Activated naive CD4-positive, alpha-beta T cell treated with anti-CD3 and anti-CD28 coated beads for 36 hours (primary cell): ENCODE measurements at regions of chr2 and their contacts with region 1.

Region 1: DNA sequence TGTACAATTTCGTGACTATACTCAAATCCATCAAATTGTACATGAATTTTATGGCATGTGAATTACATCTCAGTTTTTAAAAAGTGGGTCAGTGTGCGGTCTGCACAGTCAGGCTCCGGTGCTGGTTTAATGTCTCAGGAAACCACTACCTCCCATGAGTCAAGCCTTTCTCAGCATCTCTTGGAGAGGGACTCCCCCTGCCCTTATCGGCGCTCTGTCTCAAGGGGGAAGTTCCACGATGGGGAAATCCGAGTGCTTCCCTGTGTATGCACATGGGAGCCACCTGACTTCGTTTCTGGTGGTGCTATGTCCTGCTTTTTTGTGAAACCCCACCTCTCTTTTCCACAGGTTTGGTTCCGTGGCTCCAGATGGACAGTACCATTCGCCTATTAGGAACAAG is 72.5 kb downstream of the ACOXL start:
- DNase-seq: peak; percentile 87
- H3K4me3 Mint-ChIP-seq: no peak overlapping the region
- H3K27ac Mint-ChIP-seq: no peak overlapping the region
- H3K4me1 Mint-ChIP-seq: peaks cover 16% of the 10 kb centered on the region
- H3K27me3 Mint-ChIP-seq: peaks cover 64% of the 10 kb centered on the region

Region 2: GRCh38 chr2:110748489-110748867 is 56.4 kb before region 1 on chr2:
- CTCF ChIA-PET with region 1: no interaction called
- intact Hi-C with region 1: loop called (anchors 1 kb)
- DNase-seq: peak; percentile 83
- H3K4me3 Mint-ChIP-seq: no peak overlapping the region
- H3K27ac Mint-ChIP-seq: no peak overlapping the region
- H3K4me1 Mint-ChIP-seq: peaks cover 17% of the 10 kb centered on the region
- H3K27me3 Mint-ChIP-seq: peaks cover 70% of the 10 kb centered on the region

Region 3: GRCh38 chr2:110843959-110844510 is 39.1 kb after region 1 on chr2:
- CTCF ChIA-PET with region 1: no interaction called
- intact Hi-C with region 1: loop called (anchors 1 kb)
- DNase-seq: peak; percentile 24
- H3K4me3 Mint-ChIP-seq: no peak overlapping the region
- H3K27ac Mint-ChIP-seq: no peak overlapping the region
- H3K4me1 Mint-ChIP-seq: peaks cover 55% of the 10 kb centered on the region
- H3K27me3 Mint-ChIP-seq: peaks cover 29% of the 10 kb centered on the region

Region 4: DNA sequence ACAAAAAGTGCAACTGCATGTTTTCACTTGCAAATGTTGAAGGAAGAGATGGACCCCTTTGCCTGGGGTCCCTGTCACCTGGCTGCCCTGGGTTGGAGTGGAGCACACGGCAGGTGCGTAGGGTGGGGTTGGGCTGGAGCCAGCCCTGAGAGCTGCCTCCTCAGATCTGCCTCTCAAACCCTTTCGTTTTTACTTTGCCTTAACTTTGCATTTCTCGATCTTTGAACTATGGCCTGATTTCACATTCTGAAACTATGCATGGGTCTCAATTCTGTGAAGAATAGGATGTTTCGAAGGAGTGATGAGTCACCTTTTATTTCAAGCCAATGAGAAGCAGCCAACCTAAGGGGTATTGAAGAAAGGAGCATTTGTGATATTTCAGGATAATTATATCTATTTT is 60.3 kb after region 1 on chr2:
- CTCF ChIA-PET with region 1: no interaction called
- intact Hi-C with region 1: loop called (anchors 2 kb)
- DNase-seq: peak; percentile 47
- H3K4me3 Mint-ChIP-seq: no peak overlapping the region
- H3K27ac Mint-ChIP-seq: no peak overlapping the region
- H3K4me1 Mint-ChIP-seq: peaks cover 35% of the 10 kb centered on the region
- H3K27me3 Mint-ChIP-seq: peaks cover 51% of the 10 kb centered on the region

Region 5: DNA sequence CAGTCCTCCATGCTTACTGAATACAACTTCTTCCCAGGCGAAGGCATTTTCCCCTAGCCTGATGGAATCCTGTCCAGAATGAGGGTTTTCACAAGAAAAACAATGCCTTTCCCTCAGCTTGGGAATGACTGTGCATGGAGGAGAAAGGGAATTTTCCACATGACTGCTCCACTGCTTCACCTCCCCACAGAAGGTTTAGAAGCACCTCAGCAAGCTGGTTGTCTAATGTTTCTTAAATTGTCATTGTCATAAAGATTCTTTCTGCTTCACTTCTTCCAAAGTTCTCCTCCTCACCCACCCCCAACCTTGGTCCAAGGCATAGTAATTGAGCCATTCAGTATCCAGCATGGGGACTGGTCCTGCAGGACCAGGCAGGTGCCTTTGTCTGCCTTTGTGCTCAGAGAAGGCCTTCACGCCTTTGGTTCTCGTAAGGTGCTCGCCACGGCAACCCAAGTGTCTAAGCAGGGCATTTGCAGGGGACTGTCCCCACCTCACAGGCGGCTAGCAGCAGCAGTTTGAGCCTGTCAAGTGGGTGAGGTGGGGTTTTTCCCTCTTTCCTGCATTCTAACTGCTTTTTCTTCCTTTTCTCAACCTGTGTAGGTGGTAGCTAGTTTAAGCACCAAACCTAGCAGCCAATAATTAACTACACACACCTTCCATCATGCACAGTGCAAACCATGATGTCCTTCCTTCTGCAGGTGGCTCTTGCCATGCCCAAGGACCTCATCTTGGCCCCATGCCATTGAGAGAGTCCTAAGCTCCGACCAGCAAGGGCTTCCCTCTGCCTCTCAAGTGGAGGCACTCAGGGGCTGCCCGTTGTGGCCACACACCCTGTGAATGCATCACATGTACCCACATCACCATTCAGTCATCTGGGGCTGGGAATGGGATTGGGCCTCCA is 250.1 kb after region 1 on chr2:
- CTCF ChIA-PET with region 1: no interaction called
- intact Hi-C with region 1: loop called (anchors 2 kb)
- DNase-seq: peak; percentile 80
- H3K4me3 Mint-ChIP-seq: no peak overlapping the region
- H3K27ac Mint-ChIP-seq: no peak overlapping the region
- H3K4me1 Mint-ChIP-seq: peaks cover 30% of the 10 kb centered on the region
- H3K27me3 Mint-ChIP-seq: peaks cover 30% of the 10 kb centered on the region

Region 6: GRCh38 chr2:111698743-111699554 is 894.0 kb after region 1 on chr2:
- CTCF ChIA-PET with region 1: no interaction called
- intact Hi-C with region 1: loop called (anchors 5 kb)
- DNase-seq: peak; percentile 78
- H3K4me3 Mint-ChIP-seq: no peak overlapping the region
- H3K27ac Mint-ChIP-seq: no peak overlapping the region
- H3K4me1 Mint-ChIP-seq: peaks cover 19% of the 10 kb centered on the region
- H3K27me3 Mint-ChIP-seq: peaks cover 23% of the 10 kb centered on the region